Caco-2 (cell line): ENCODE measurements at regions of chr14 and their contacts with region 1.

Region 1: GRCh38 chr14:67674481-67675169 is at the start of gene VTI1B:
- DNase-seq: peak; percentile 82 to 88
- H3K4me3 ChIP-seq: peak within 1 kb of the TSS; percentile 96
- H3K4me3 Mint-ChIP-seq: peak within 1 kb of the TSS; percentile 91
- H3K27ac Mint-ChIP-seq: peak within 1 kb of the TSS; percentile 85
- H3K4me1 ChIP-seq: no peaks in the 10 kb centered on the region; the same call in 1 of the 2 replicates
- H3K4me1 Mint-ChIP-seq: peaks cover 15% of the 10 kb centered on the region
- H3K27me3 ChIP-seq: no peaks in the 10 kb centered on the region
- H3K27me3 Mint-ChIP-seq: no peaks in the 10 kb centered on the region
- CTCF ChIP-seq: peak in 1 of 2 experiments; percentile 40
- total RNA-seq, gene VTI1B: 102 and 117 TPM in 2 replicates

Region 2: DNA sequence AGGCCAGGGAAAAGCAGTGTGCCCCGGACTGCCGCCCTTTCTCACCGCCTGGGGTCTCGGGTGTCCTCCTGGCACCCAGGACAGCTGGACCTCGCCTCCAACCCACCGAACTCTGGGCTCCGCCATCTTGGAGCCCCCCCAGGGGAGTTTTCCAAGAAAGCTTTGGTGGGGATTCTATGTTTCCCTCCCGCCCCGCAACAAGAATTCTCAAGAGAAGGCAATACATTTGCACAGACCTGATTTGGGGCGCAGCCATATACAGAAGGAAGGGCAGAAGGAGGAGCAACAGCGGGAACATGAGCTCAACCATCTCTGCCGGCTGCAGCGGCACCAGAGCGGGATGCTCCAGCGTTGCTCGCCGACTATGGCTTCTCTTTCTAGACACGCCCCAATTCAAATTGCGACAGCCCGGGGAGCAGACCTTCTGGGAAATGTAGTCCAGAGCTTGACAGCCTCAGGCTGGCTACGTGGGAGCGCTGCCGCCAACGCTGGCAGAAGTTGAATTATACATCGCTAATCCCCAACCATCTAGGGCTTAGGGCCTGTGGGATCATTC is 20.8 kb after region 1 on chr14 and contains the start of gene RDH11:
- CTCF ChIA-PET with region 1: interaction called, 8 read pairs
- POLR2A ChIA-PET with region 1: interaction called, 4 read pairs
- intact Hi-C with region 1: loop called (anchors 1 kb)
- DNase-seq: peak; percentile 89 to 91
- H3K4me3 ChIP-seq: peak within 1 kb of the TSS; percentile 50
- H3K4me3 Mint-ChIP-seq: peak within 1 kb of the TSS; percentile 100
- H3K27ac Mint-ChIP-seq: peak within 1 kb of the TSS; percentile 99
- H3K4me1 ChIP-seq: 0 out of 2 replicates have a peak, but pooled peaks cover 7% of the 10 kb centered on the region
- H3K4me1 Mint-ChIP-seq: peaks cover 6% of the 10 kb centered on the region
- H3K27me3 ChIP-seq: no peaks in the 10 kb centered on the region
- H3K27me3 Mint-ChIP-seq: no peaks in the 10 kb centered on the region
- CTCF ChIP-seq: no peak
- total RNA-seq, gene RDH11: 80.2 and 83.1 TPM in 2 replicates

Region 3: DNA sequence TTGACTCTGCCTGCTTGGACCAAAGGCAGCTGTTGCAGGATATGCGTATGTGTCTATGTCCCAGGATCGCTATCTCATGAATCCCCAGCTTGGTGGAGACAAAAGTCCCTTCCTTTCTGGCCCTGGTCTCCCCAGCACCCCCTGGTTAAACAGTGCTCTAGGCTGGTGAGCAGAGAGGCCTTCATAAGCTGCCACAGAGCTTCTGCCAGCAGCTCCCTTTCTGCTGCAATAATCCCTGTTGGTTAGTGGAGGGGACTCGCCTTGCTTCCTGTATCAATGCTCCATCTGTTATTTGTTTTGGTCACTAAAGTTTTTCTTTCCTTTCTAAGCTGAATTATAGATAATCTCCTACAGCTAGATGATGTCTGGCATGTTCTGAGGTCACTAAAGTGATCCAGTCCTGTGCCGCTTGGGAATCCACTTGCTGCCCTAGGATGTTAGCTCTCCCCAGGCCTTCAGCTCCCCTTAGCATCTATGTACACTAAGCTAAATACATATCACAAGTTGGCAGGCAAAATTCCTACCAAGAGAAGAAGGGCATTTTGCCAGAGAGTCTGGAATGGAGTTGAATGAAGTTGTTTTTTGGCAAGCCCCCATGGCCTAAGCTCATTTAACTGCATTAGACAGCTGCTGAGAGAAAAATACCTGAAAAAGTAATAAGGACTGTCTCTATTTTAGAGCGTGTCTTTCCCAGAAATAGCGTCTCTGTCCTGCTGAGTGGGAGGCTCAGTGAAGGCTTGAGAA is 74.9 kb after region 1 on chr14:
- CTCF ChIA-PET with region 1: no interaction called
- POLR2A ChIA-PET with region 1: no interaction called
- intact Hi-C with region 1: no loop called
- DNase-seq: no peak
- H3K4me3 ChIP-seq: no peak overlapping the region
- H3K4me3 Mint-ChIP-seq: no peak overlapping the region
- H3K27ac Mint-ChIP-seq: peak overlapping the region; percentile 50
- H3K4me1 ChIP-seq: no peaks in the 10 kb centered on the region
- H3K4me1 Mint-ChIP-seq: no peaks in the 10 kb centered on the region
- H3K27me3 ChIP-seq: no peaks in the 10 kb centered on the region
- H3K27me3 Mint-ChIP-seq: no peaks in the 10 kb centered on the region
- CTCF ChIP-seq: no peak

Region 4: DNA sequence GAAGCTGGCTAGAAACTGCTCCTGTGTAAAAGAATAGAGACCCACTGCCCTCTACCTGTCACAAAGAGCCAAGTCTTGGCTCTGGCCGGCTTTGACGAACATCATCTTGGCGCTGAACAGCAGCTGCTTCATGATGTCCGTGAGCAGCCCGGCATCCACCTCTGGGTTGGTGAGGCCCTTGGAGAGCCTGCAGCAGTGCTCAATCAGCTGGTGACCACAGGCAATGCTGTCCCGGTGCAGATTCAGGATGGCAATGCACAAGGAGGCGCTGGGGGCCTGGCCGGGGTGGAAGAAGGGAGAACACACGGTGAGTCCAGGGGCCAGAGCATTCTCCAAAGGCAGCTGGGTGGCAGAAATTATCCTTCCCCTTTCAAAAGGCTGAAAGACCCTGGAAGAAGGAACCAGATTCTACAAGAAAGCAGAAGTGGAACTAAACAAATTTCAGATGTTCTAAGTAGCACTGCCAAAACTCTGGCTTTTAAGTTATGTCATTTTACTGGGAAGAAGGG is 91.6 kb after region 1 on chr14:
- CTCF ChIA-PET with region 1: interaction called, 4 read pairs
- POLR2A ChIA-PET with region 1: interaction called, 4 read pairs
- intact Hi-C with region 1: loop called (anchors 1 kb)
- DNase-seq: peak in 1 of 2 experiments; percentile 14
- H3K4me3 ChIP-seq: no peak overlapping the region
- H3K4me3 Mint-ChIP-seq: no peak overlapping the region
- H3K27ac Mint-ChIP-seq: no peak overlapping the region
- H3K4me1 ChIP-seq: peaks cover 28% of the 10 kb centered on the region
- H3K4me1 Mint-ChIP-seq: peaks cover 32% of the 10 kb centered on the region
- H3K27me3 ChIP-seq: no peaks in the 10 kb centered on the region
- H3K27me3 Mint-ChIP-seq: no peaks in the 10 kb centered on the region
- CTCF ChIP-seq: peak; percentile 19 to 24